Endothelial cell of umbilical vein (primary cell): ENCODE measurements at regions of chr4 and their contacts with region 1.

Region 1: DNA sequence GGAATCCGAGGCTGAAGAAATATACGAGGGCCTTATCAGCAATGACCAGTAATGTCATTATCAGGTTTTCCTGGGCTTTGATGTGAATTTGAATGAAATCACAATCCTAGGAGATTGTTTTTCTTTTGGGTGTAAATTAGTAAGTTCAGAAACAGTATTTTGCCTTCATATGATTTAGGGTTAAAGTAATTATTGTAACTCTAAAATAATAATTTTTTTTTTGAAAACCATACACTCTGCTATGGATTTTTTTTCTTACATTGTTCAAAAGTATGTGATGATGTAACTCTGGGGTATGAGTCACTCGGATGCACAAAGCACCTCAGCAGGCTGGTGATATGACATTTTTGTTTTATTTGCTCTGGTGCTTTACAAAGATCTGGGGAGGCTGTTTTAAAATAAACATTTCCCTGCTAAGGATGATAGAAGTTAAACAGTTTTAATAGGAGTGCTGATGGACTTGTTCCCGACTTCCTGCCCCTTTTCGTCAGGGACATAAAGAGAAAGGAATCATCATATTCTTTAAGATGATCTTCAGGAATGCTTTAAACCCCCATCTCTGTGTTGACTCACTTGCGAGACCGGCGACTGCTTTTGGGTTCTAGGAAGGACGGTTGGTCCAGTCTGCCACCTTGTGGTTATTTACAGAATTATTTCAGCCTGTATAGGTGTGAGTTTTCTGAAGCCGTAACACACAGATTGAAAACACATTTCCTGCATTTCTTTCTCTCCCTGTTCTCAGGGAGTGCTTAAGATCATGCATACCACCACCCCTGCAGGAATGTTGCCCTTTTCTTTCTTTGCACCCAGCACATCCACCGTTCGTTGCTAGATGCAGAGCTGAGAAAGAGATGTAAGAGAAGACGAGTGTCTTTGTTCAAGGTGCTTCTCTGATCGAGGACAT is 72.5 kb downstream of the RAPGEF2 start:
- DNase-seq: peak; percentile 93
- H3K4me3 ChIP-seq: peak overlapping the region in 1 of 3 experiments; percentile 72
- H3K27ac ChIP-seq: peak overlapping the region; percentile 63
- H3K4me1 ChIP-seq: peaks cover 42% of the 10 kb centered on the region
- H3K27me3 ChIP-seq: no peaks in the 10 kb centered on the region
- CTCF ChIP-seq: peak; percentile 60 to 62
- POLR2A ChIP-seq: peak; percentile 27

Region 2: GRCh38 chr4:158710814-158711213 is 464.5 kb before region 1 on chr4:
- CTCF ChIA-PET with region 1: no interaction called
- POLR2A ChIA-PET with region 1: no interaction called
- dilution Hi-C with region 1: no loop called
- intact Hi-C with region 1: no loop called
- DNase-seq: peak; percentile 31
- H3K4me3 ChIP-seq: no peak overlapping the region
- H3K27ac ChIP-seq: no peak overlapping the region
- H3K4me1 ChIP-seq: no peaks in the 10 kb centered on the region
- H3K27me3 ChIP-seq: no peaks in the 10 kb centered on the region
- CTCF ChIP-seq: peak; percentile 12 to 17
- POLR2A ChIP-seq: no peak

Region 3: GRCh38 chr4:158722917-158723793 is 452.2 kb before region 1 on chr4 and contains the start of gene PPID:
- CTCF ChIA-PET with region 1: no interaction called
- POLR2A ChIA-PET with region 1: no interaction called
- dilution Hi-C with region 1: no loop called
- intact Hi-C with region 1: loop called (anchors 2 kb)
- DNase-seq: peak; percentile 80
- H3K4me3 ChIP-seq: peak within 1 kb of the TSS; percentile 67 to 87 (median 76)
- H3K27ac ChIP-seq: peak within 1 kb of the TSS; percentile 68
- H3K4me1 ChIP-seq: peaks cover 8% of the 10 kb centered on the region
- H3K27me3 ChIP-seq: no peaks in the 10 kb centered on the region
- CTCF ChIP-seq: no peak
- POLR2A ChIP-seq: peak; percentile 93
- total RNA-seq, gene PPID: 24.7 and 25.7 TPM in 2 replicates

Region 4: GRCh38 chr4:158768555-158769174 is 406.7 kb before region 1 on chr4 and contains the start of gene FNIP2:
- CTCF ChIA-PET with region 1: no interaction called
- POLR2A ChIA-PET with region 1: no interaction called
- dilution Hi-C with region 1: no loop called
- intact Hi-C with region 1: loop called (anchors 5 kb)
- DNase-seq: peak; percentile 80
- H3K4me3 ChIP-seq: peak within 1 kb of the TSS; percentile 59 to 80 (median 75)
- H3K27ac ChIP-seq: peak within 1 kb of the TSS; percentile 68
- H3K4me1 ChIP-seq: peaks cover 31% of the 10 kb centered on the region
- H3K27me3 ChIP-seq: no peaks in the 10 kb centered on the region
- CTCF ChIP-seq: no peak
- POLR2A ChIP-seq: peak; percentile 53
- total RNA-seq, gene FNIP2: 13.6 and 14.4 TPM in 2 replicates

Region 5: DNA sequence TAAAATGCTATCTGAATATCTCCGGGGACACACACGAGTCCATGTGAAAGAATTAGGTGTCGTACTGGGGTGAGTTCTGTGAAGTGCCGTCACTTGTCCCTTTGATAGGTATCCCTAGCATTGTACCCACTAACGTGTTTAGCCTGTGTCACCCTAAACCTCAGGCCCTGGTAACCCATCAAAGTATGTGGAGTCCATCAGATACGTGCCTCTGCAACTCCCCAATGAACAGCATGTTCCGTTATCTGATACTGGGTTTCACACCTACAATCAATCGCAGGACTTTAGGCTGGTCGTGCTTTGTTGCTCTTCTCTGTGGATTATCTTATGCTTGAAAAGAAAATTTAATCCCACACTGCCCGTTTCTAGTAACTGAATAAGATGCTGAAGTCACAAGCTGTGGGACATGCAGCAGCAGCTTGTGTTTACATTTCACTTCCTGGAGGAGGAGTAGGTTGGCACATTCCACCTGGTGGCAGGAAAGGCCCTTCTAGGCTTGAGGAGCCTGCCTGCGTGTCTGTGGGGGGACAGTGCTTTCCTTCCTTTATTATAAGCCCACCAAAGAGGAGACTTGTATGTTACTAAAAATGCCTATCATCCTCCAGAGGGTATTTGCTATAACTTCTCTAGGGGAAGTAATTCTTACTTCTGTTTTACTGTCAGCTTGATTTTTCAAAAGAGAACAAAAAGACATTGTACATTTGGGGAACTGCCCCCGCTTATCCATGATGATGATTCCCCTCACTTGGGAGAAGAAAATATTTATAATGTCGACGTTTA is 279.4 kb before region 1 on chr4:
- CTCF ChIA-PET with region 1: interaction called, 4 read pairs
- POLR2A ChIA-PET with region 1: no interaction called
- dilution Hi-C with region 1: no loop called
- intact Hi-C with region 1: loop called (anchors 1 kb)
- DNase-seq: peak; percentile 49
- H3K4me3 ChIP-seq: peak overlapping the region in 1 of 3 experiments; percentile 1
- H3K27ac ChIP-seq: peak overlapping the region; percentile 56
- H3K4me1 ChIP-seq: peaks cover 11% of the 10 kb centered on the region
- H3K27me3 ChIP-seq: no peaks in the 10 kb centered on the region
- CTCF ChIP-seq: peak in 1 of 2 donors; percentile 15
- POLR2A ChIP-seq: no peak

Region 6: DNA sequence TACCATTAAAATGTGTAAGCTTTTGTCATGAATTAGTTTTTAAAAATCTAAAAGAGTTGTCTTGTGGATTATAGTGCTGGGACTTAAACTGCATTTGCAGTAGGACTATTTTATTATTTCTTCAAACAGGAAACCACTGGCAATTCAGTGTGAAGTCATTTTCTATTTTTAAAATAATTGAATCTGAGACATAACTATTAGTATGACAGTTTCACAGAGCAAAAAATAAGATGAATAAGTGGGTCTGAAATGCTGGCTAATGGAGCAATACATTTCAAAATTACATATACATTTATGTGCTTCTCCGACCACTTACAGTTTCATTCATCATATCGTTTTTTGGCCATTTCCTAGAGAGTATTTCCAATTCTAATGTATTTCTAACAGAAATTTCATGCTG is 147.8 kb before region 1 on chr4:
- CTCF ChIA-PET with region 1: no interaction called
- POLR2A ChIA-PET with region 1: no interaction called
- dilution Hi-C with region 1: no loop called
- intact Hi-C with region 1: loop called (anchors 5 kb)
- DNase-seq: peak; percentile 73
- H3K4me3 ChIP-seq: no peak overlapping the region
- H3K27ac ChIP-seq: peak overlapping the region; percentile 45
- H3K4me1 ChIP-seq: peaks cover 24% of the 10 kb centered on the region
- H3K27me3 ChIP-seq: no peaks in the 10 kb centered on the region
- CTCF ChIP-seq: no peak
- POLR2A ChIP-seq: no peak

Region 7: GRCh38 chr4:159446266-159446976 is 271.1 kb after region 1 on chr4:
- CTCF ChIA-PET with region 1: no interaction called
- POLR2A ChIA-PET with region 1: no interaction called
- dilution Hi-C with region 1: no loop called
- intact Hi-C with region 1: loop called (anchors 1 kb)
- DNase-seq: peak; percentile 76
- H3K4me3 ChIP-seq: no peak overlapping the region
- H3K27ac ChIP-seq: no peak overlapping the region
- H3K4me1 ChIP-seq: no peaks in the 10 kb centered on the region
- H3K27me3 ChIP-seq: no peaks in the 10 kb centered on the region
- CTCF ChIP-seq: peak; percentile 78 to 81
- POLR2A ChIP-seq: no peak